ENCODE measurements at regions of chr4 and their contacts with region 1.

Region 1: DNA sequence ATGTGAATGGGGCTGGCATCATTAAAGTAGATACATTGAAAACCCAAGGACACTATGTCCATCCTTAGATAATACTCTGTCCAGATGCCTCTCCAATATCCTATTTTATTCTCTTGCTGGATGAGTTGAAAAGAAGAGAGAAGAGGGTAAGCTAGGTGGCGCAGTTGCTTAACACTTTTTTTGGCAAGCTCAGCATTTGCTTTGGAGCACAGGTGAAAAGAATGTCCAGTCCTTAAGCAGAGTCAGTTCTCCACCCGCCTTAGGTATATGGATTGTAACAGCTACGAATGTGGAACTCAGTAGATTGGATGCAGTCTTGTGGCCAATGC is 208.4 kb downstream of the NWD2 start:
- DNase-seq: peak in 5 of 10 donors; percentile 43 to 73 (median 57)
- H3K4me3 ChIP-seq: peak overlapping the region; percentile 45 to 82 (median 70)
- H3K27ac ChIP-seq: peak overlapping the region in 21 of 59 donors; percentile 7 to 80 (median 48)
- H3K27me3 ChIP-seq: no peaks in the 10 kb centered on the region
- CTCF ChIP-seq: peak; percentile 41 to 80 (median 66)

Region 2: GRCh38 chr4:37365888-37366287 is 87.0 kb before region 1 on chr4:
- intact Hi-C with region 1: no loop called
- DNase-seq: no peak
- H3K4me3 ChIP-seq: no peak overlapping the region
- H3K27ac ChIP-seq: no peak overlapping the region
- H3K27me3 ChIP-seq: no peaks in the 10 kb centered on the region
- CTCF ChIP-seq: no peak

Region 3: GRCh38 chr4:37567841-37568240 is 114.9 kb after region 1 on chr4:
- intact Hi-C with region 1: loop called (anchors 2 kb)
- DNase-seq: no peak
- H3K4me3 ChIP-seq: no peak overlapping the region
- H3K27ac ChIP-seq: no peak overlapping the region
- H3K27me3 ChIP-seq: no peaks in the 10 kb centered on the region
- CTCF ChIP-seq: no peak

Region 4: GRCh38 chr4:38482696-38483095 is 1029.8 kb after region 1 on chr4:
- intact Hi-C with region 1: no loop called
- DNase-seq: no peak
- H3K4me3 ChIP-seq: no peak overlapping the region
- H3K27ac ChIP-seq: no peak overlapping the region
- H3K27me3 ChIP-seq: no peaks in the 10 kb centered on the region
- CTCF ChIP-seq: no peak